ENCODE measurements at regions of chr2 and their contacts with region 1.

Region 1: DNA sequence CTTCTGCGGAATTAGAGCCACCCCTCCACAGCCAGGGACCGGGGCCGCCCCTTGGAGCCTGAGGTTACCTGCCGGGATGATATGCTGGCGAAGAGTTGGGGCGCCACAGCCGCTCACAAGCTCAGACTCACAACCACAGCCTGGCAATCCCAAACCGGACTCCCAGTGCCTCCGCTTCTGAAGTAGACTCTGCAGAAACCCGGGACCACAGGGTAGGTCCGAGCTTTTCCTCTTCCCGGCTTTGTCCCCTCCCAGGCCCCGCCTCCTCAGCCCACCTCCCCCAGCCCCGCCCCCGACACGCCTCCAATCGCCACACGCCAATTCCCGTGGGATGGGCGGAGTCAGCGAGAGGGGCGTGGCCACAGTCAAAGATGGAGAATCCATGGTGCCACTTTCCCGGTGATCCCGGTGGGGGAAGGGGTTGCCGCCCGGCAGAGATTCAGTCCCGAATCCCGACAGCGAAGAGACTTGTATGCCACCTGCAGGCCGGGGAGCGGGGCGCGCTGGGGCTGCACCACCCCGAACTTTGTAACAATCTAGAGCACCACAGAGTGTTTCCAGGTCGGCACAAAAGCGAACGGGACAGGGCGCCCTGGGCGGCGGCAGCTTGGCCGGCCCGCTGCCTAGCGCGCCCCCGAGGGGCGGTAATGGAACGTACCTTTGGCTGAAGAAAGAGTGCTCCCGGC is at the start of gene IDH1:
- DNase-seq: peak; percentile 96
- H3K4me3 ChIP-seq: peak within 1 kb of the TSS; percentile 68 to 77
- H3K27ac ChIP-seq: peak within 1 kb of the TSS; percentile 58 to 82
- H3K4me1 ChIP-seq: peaks cover 7% of the 10 kb centered on the region
- H3K27me3 ChIP-seq: no peaks in the 10 kb centered on the region
- CTCF ChIP-seq: peak in 3 of 4 experiments; percentile 46 to 54 (median 48)
- POLR2A ChIP-seq: peak; percentile 45
- total RNA-seq, gene IDH1: 103 to 314 TPM

Region 2: DNA sequence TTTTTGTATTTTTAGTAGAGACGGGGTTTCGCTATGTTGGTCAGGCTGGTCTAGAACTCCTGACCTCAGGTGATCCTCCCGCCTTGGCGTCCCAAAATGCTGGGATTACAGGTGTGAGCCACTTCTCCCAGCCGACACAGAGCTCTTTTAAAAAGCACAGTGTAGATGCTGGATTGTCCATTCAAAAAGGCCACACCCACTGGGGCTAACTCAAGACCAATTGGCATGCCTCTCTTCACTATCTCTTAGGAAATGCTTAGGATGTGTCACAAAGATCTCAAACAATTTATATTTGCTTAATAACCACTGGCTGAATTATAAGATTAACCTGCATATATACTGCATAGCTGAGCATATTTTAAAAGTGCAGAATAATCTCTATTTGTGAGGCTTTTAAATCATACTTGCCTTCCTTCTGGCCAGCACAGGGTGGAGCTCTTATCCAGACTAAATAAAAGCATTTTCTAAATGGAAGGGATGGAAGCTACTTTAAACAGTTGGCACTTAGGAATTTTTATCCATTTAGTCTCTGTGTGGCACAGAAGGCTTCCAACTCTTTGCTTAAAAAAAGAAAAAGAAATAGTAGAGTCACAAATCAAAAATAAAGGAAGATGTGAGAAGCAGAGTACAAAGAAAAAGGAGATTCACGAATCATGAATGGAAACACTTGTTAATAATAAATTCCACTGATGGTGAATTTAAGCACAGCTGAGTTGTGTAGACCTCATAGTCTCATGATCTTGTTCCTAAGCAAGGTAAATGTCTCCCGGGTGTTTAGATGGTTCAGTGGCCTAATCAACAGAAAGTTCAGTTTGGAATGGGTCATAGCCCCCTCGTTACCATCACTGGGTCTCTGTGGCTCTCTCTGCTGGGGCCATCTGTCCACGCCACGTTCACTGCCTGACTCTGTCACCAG is 153.0 kb before region 1 on chr2:
- intact Hi-C with region 1: loop called (anchors 5 kb)
- DNase-seq: no peak
- H3K4me3 ChIP-seq: no peak overlapping the region
- H3K27ac ChIP-seq: no peak overlapping the region
- H3K4me1 ChIP-seq: no peaks in the 10 kb centered on the region
- H3K27me3 ChIP-seq: no peaks in the 10 kb centered on the region
- CTCF ChIP-seq: peak in 2 of 4 experiments; percentile 24 to 27
- POLR2A ChIP-seq: no peak

Region 3: DNA sequence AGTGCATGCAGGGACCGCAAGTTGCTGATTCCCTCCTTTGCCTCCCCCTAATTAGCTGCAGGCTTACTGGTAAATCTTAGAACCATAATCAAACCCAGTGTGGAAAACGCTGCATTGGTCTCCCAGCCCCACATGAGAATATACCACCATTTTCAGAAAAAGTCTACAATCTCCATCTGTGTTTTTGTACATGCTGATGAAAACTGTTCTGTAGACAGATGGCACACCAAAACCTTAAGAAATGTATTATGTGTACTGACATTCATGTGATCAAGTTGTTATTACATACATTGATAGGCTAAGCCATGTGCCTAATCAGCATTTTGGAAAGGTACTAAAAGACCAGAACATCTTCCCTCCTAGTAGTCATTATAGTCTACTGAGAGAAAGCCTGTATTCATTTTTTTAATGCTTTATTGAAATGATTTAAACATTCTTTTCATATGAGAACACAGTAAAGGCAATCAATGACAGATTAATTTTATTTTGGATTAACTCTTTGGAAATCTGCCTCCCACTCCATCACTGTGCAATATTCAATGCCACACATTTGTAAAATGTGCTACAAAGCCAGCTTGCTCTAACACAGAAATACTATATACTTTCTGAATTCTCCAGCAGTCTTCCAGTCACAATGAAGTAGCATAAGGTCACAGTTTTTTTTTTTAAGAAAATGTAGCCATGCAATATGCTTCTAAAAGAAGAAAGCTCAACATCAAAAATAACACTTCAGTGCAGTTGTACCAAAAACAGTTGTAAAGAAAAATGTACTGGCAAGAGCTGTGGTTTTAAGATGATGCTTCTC is 89.9 kb before region 1 on chr2:
- intact Hi-C with region 1: no loop called
- DNase-seq: no peak
- H3K4me3 ChIP-seq: no peak overlapping the region
- H3K27ac ChIP-seq: no peak overlapping the region
- H3K4me1 ChIP-seq: no peaks in the 10 kb centered on the region
- H3K27me3 ChIP-seq: no peaks in the 10 kb centered on the region
- CTCF ChIP-seq: no peak
- POLR2A ChIP-seq: no peak

Region 4: DNA sequence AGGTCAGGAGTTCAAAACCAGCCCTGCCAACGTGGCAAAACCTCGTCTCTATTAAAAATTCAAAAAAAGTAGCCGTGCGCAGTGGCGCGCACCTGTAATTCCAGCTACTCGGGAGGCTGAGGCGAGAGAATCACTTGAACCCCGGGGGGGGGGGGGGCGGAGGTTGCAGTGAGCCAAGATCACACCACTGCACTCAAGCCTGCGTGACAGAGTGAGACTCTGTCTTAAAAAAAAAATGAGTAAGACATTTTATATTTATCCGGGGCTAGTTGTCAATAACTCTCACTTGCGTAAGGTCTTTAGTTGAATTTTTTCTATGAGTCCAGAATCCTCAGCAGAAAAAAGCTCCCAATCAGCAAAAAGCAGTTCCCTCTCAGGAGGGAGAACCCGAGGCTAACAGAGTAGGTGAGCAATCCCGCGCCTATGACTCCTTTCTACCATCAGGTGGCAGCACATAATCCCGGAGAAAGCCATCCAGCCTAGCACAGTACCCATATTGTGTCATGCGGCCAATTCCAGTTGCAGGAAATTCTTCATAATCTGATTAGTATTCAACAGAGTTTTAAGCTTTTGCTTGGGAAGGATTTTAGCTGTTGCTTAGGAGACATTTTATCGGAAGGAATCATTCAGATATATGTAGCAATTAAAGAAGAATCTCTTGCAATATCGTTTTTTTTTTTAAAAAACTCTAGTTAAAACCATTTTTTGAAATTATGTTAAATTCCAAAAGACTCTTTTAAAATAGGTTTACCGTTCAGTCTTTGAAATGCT is 79.8 kb before region 1 on chr2:
- intact Hi-C with region 1: loop called (anchors 1 kb)
- DNase-seq: peak; percentile 74
- H3K4me3 ChIP-seq: no peak overlapping the region
- H3K27ac ChIP-seq: no peak overlapping the region
- H3K4me1 ChIP-seq: no peaks in the 10 kb centered on the region
- H3K27me3 ChIP-seq: no peaks in the 10 kb centered on the region
- CTCF ChIP-seq: peak; percentile 55 to 84 (median 76)
- POLR2A ChIP-seq: no peak

Region 5: GRCh38 chr2:208265801-208266552 is 11.0 kb after region 1 on chr2 and contains the start of gene PIKFYVE:
- intact Hi-C with region 1: loop called (anchors 1 kb)
- DNase-seq: peak; percentile 94
- H3K4me3 ChIP-seq: peak within 1 kb of the TSS; percentile 74 to 93
- H3K27ac ChIP-seq: peak within 1 kb of the TSS; percentile 92 to 95
- H3K4me1 ChIP-seq: no peaks in the 10 kb centered on the region
- H3K27me3 ChIP-seq: no peaks in the 10 kb centered on the region
- CTCF ChIP-seq: peak in 1 of 4 experiments; percentile 18
- POLR2A ChIP-seq: peak; percentile 77
- total RNA-seq, gene PIKFYVE: 26.7 to 47.1 TPM

Region 6: GRCh38 chr2:208315081-208315788 is 60.2 kb after region 1 on chr2:
- intact Hi-C with region 1: loop called (anchors 10 kb)
- DNase-seq: no peak
- H3K4me3 ChIP-seq: no peak overlapping the region
- H3K27ac ChIP-seq: no peak overlapping the region
- H3K4me1 ChIP-seq: peaks cover 2% of the 10 kb centered on the region
- H3K27me3 ChIP-seq: no peaks in the 10 kb centered on the region
- CTCF ChIP-seq: no peak
- POLR2A ChIP-seq: no peak

Region 7: DNA sequence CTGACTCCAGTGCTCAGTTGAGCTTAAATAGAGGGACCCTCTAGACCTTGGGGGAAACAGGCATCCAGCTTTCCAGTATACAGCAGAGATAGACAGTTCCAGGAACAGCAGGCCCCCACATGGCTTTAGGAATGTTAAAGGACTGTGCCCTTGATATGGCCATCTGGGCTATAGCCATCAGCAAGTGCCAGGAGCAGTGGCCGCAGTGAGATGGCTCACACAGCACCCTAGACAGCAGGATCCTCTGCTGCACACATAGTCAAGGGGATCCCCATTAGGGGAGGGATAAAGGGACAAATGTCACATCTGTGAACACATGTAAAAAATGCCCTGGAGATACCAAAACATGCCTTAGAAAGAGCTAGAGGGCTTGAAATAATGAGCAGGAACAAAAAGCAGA is 365.0 kb after region 1 on chr2:
- intact Hi-C with region 1: no loop called
- DNase-seq: no peak
- H3K4me3 ChIP-seq: no peak overlapping the region
- H3K27ac ChIP-seq: no peak overlapping the region
- H3K4me1 ChIP-seq: no peaks in the 10 kb centered on the region
- H3K27me3 ChIP-seq: no peaks in the 10 kb centered on the region
- CTCF ChIP-seq: no peak
- POLR2A ChIP-seq: no peak

Region 8: DNA sequence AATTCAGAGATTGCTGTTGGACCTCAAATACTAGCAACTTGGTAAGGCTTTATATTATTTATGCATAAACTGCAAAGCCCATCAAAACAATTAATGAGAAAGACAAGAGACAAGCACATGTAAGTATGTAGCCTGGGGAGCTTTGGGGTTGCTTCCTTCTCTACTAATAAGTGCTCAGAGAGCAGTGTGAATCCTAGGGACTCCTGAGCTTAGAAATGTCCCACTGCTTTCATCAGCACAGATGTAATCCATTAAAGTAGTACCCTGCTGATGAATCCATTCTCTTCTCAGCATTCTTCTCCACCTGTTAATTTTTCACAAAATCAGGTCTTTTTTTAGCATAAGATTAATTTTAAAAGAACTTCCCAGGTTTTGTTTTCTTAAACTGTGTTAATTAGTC is 637.2 kb after region 1 on chr2:
- intact Hi-C with region 1: no loop called
- DNase-seq: no peak
- H3K4me3 ChIP-seq: no peak overlapping the region
- H3K27ac ChIP-seq: no peak overlapping the region
- H3K4me1 ChIP-seq: no peaks in the 10 kb centered on the region
- H3K27me3 ChIP-seq: no peaks in the 10 kb centered on the region
- CTCF ChIP-seq: no peak
- POLR2A ChIP-seq: no peak

Region 9: DNA sequence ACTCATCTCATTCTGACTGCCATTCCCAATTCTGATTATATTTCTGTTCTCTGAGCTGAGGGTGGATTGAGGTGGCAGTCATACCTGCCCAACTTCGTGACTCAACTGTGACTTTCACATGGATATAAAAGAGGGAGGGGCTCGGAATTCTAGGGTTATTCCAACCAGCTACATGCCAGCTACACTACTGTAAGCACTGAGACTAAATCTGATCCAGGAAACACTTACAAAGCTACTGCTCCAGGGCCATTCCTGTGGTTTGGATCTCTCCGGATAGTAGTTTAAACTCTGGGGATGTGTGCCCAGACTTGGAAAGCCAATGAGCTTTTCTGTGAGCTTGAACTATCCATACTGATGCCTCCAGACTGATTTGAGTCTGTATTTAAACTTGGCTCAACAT is 1176.7 kb after region 1 on chr2:
- intact Hi-C with region 1: no loop called
- DNase-seq: peak; percentile 18
- H3K4me3 ChIP-seq: no peak overlapping the region
- H3K27ac ChIP-seq: no peak overlapping the region
- H3K4me1 ChIP-seq: no peaks in the 10 kb centered on the region
- H3K27me3 ChIP-seq: no peaks in the 10 kb centered on the region
- CTCF ChIP-seq: no peak
- POLR2A ChIP-seq: no peak